Dorsolateral prefrontal cortex (tissue), 120 donors: ENCODE measurements at regions of chr15 and their contacts with region 1.

Region 1: GRCh38 chr15:28021281-28022039 is 77.7 kb downstream of the OCA2 start:
- DNase-seq: peak in 9 of 10 donors; percentile 51 to 85 (median 78)
- H3K4me3 ChIP-seq: no peak overlapping the region
- H3K27ac ChIP-seq: peak overlapping the region in 43 of 59 donors; percentile 6 to 83 (median 55)
- H3K27me3 ChIP-seq: no peaks in the 10 kb centered on the region
- CTCF ChIP-seq: peak in 54 of 56 donors; percentile 22 to 68 (median 54)

Region 2: DNA sequence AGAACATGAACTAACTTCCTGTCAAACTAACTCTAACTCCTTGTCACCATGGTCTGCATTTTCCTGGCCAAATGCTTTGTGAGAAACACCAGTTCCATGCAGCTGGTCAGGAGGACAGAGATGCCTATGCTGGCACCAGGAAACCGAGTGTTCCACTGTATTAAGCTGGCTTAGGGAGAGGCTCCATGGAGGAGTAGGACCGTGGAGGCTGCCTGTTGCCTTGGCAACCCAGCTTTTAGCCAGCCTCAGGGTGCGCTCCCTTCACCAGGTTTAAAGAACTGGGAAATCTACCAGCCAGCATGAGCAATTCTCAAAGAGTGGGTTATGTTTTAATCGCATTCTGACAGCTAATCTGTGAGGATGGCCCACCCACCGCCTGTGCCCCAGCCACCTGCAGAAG is 316.4 kb before region 1 on chr15:
- intact Hi-C with region 1: loop called in 1 of 2 experiments (anchors 10 kb)
- DNase-seq: peak in 8 of 10 donors; percentile 35 to 79 (median 70)
- H3K4me3 ChIP-seq: no peak overlapping the region
- H3K27ac ChIP-seq: peak overlapping the region in 31 of 59 donors; percentile 2 to 91 (median 44)
- H3K27me3 ChIP-seq: no peaks in the 10 kb centered on the region
- CTCF ChIP-seq: no peak

Region 3: GRCh38 chr15:27742751-27743477 is 278.5 kb before region 1 on chr15:
- intact Hi-C with region 1: no loop called
- DNase-seq: peak in 9 of 10 donors; percentile 37 to 83 (median 54)
- H3K4me3 ChIP-seq: no peak overlapping the region
- H3K27ac ChIP-seq: peak overlapping the region in 3 of 59 donors; percentile 9 to 48 (median 14)
- H3K27me3 ChIP-seq: no peaks in the 10 kb centered on the region
- CTCF ChIP-seq: peak in 1 of 56 donors; percentile 16

Region 4: DNA sequence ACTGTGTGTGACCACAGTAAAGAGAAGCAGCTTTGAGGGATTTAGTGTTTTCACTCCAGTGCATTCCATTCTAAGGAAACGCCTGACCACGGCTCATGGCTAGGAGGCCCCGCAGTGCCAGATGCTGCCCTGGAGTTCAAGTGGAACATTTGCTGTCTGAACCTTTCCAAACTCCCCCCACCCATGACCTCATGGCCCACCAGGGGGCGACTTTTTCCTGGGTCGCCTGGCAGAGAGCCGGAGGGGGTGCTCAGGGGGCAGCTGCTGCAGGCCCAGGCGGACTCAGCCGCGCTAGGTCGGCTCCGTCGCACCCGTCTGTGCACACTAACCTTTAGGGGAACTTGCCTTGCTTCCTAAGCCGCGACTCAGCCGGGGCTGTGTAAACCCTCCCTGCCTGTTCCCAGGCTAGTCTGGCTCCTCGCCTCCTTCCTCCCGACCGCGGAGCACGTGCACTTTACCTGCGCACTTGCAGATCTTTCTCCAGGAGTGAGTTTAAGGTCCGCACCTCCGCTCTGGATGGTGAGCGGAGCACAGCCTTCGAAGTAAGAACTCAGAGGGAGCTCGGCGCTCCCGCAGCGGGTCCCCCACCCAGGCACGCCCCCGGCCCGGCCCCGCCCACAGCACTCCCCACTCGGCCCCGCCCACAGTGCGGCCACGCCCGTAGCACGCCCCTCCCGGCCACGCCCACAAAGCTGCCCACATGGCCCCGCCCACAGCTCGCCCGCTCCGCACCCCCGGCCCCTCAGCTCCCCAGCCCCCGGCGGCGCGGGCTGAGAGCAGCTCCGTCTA is 77.5 kb after region 1 on chr15 and contains the start of gene OCA2:
- intact Hi-C with region 1: no loop called
- DNase-seq: peak in 1 of 10 donors; percentile 5
- H3K4me3 ChIP-seq: peak within 1 kb of the TSS in 15 of 59 donors; percentile 0 to 35 (median 21)
- H3K27ac ChIP-seq: no peak within 1 kb of the TSS
- H3K27me3 ChIP-seq: peaks cover 0 to 68% (median 28%) of the 10 kb centered on the region in 45 donors
- CTCF ChIP-seq: peak in 4 of 56 donors; percentile 8 to 17 (median 14)
- total RNA-seq, gene OCA2: 2.0 to 12.0 (median 6.1) TPM